ENCODE measurements at regions of chr14 and their contacts with region 1.

Region 1: DNA sequence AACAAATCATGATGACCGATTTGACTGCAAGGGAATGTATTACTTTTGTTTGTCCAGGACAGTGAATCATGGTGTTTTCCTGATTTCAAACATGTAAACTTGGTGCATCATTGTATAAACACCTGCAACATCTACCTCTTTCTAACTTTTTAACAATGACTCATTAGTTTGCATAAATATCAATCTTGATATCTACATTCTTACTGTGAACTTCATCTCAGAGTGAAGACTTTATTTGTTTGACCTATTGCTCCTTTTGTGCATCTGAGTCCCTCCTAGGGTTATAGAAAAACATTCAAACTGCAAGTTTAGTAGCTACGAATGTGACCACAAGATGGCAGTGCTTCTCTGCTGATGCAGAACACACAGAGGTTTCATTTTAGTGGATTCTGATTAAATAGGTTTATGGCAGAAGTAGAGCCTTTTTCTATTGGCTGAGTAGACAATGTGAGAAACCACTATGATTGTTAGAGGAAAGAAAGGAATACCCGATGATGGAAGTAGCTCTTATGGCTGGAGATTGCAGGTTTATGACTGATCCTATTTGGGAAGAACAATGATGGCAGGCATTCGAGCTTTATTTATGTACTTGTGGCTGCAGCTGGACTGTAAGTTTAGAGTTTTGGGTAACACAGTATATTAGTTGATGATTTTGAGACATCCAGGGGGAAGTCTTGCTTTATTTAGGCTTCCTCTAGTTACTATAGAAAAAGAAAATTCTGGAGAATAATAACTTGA is 244.2 kb upstream of the OR4E1 start:
- DNase-seq: peak; percentile 95
- ATAC-seq: peak; percentile 72
- H3K4me3 ChIP-seq: peak overlapping the region; percentile 48; the same call in 1 of the 2 replicates
- H3K27ac ChIP-seq: peak overlapping the region; percentile 79; the same call in 1 of the 2 replicates
- H3K4me1 ChIP-seq: peaks cover 46% of the 10 kb centered on the region
- H3K27me3 ChIP-seq: peaks cover 3% of the 10 kb centered on the region
- CTCF ChIP-seq: peak; percentile 96

Region 2: GRCh38 chr14:21846227-21846885 is 71.5 kb before region 1 on chr14:
- CTCF ChIA-PET with region 1: no interaction called
- POLR2A ChIA-PET with region 1: no interaction called
- intact Hi-C with region 1: no loop called
- DNase-seq: peak; percentile 52
- ATAC-seq: no peak
- H3K4me3 ChIP-seq: no peak overlapping the region
- H3K27ac ChIP-seq: no peak overlapping the region
- H3K4me1 ChIP-seq: no peaks in the 10 kb centered on the region
- H3K27me3 ChIP-seq: peaks cover 15% of the 10 kb centered on the region; the same call in 1 of the 2 replicates
- CTCF ChIP-seq: peak; percentile 80

Region 3: GRCh38 chr14:22084393-22085281 is 166.8 kb after region 1 on chr14:
- CTCF ChIA-PET with region 1: no interaction called
- POLR2A ChIA-PET with region 1: no interaction called
- intact Hi-C with region 1: loop called (anchors 10 kb)
- DNase-seq: peak; percentile 81
- ATAC-seq: peak; percentile 53; the same call in 1 of the 2 replicates
- H3K4me3 ChIP-seq: no peak overlapping the region
- H3K27ac ChIP-seq: no peak overlapping the region
- H3K4me1 ChIP-seq: peaks cover 13% of the 10 kb centered on the region
- H3K27me3 ChIP-seq: peaks cover 26% of the 10 kb centered on the region
- CTCF ChIP-seq: peak; percentile 83